Gastrocnemius medialis (tissue), 4 donors: ENCODE measurements at regions of chr2 and their contacts with region 1.

Region 1: DNA sequence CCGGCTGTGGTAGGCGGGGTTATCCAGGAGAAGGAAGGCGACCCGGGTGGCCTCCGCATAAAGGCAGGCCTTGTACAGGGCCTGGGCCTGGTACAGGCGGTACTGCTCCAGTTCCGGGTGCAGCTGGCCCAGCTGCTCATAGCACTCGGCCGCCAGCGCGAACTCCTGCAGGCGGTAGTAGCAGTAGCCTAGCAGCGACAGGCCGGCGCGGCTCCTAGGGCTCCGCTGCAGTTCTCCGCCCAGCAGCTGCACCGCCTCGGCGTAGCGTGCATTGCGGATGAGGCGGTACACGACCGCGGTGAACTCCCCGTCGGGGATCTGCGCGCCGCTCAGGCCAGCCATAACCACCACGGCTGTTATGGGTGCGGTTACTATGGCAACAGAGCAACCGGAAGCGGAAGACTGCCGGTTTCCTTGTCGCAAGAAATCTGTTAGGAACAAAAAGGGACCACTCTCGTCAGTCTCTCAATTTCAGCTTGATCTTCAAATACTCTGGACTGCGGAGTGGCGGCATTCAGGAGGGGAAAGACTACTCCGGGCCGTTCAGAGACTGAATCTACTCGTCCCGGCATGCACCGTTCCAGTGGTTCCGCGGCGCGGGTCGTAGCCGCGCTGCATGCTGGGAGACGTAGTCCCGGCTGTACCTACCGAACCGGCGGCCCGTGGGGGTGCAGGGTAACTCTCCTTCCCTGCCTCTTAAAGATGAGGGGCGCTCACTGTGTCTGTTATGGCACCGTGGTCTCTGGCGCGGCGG is 160.0 kb downstream of the AGPS start:
- DNase-seq: peak; percentile 62 to 74
- ATAC-seq: peak; percentile 96 to 97
- H3K4me3 ChIP-seq: peak overlapping the region; percentile 80 to 89 (median 82)
- H3K27ac ChIP-seq: peak overlapping the region; percentile 95 to 97 (median 96)
- H3K4me1 ChIP-seq: peaks cover 5% of the 10 kb centered on the region in 2 donors
- H3K27me3 ChIP-seq: no peaks in the 10 kb centered on the region
- CTCF ChIP-seq: no peak
- POLR2A ChIP-seq: no peak

Region 2: DNA sequence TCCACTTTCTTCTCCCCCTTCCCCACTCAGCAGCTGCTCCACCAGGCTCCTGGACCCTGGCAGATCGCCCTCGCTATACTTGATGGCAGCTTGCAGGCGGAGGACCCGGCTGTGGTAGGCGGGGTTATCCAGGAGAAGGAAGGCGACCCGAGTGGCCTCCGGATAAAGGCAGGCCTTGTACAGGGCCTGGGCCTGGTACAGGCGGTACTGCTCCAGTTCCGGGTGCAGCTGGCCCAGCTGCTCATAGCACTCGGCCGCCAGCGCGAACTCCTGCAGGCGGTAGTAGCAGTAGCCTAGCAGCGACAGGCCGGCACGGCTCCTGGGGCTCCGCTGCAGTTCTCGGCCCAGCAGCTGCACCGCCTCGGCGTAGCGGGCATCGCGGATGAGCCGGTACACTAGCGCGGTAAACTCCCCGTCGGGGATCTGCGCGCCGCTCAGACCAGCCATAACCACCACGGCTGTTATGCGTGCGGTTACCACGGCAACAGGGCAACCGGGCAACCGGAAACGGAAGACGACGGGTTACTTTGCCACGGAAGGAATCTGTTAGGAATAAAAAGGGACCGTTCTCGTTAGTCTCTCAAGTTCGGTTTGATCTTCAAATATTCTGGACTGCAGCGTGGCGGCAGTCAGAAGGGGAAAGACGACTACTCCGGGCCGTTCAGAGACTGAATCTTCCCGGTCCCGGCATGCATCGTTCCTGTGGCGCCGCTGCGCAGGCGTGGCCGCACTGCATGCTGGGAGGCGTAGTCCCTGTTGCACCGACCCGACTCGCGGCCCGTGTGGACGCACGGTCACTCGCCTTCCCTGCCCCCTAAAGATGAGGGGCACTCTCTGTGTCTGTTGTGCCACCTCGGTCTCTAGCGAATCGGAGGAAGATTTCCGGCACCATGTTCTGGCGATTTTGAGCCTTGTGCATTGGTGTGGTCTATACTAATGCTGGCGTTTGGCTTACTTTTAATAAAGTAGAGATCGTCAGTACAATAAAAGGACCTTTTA is 66.0 kb after region 1 on chr2:
- in situ Hi-C with region 1: loop called in 1 of 4 experiments (anchors 10 kb)
- intact Hi-C with region 1: loop called (anchors 1 kb)
- DNase-seq: peak; percentile 82 to 84
- ATAC-seq: peak; percentile 98
- H3K4me3 ChIP-seq: peak overlapping the region; percentile 71 to 98 (median 86)
- H3K27ac ChIP-seq: peak overlapping the region; percentile 90 to 99 (median 94)
- H3K4me1 ChIP-seq: peaks cover 10 to 14% of the 10 kb centered on the region in 2 donors
- H3K27me3 ChIP-seq: no peaks in the 10 kb centered on the region
- CTCF ChIP-seq: no peak
- POLR2A ChIP-seq: peak in 1 of 2 donors; percentile 9